Calu3 (cell line): ENCODE measurements at regions of chr12 and their contacts with region 1.

Region 1: GRCh38 chr12:10016881-10017280 is 6.5 kb downstream of the CLEC12B start:
- DNase-seq: no peak
- H3K4me3 Mint-ChIP-seq: no peak overlapping the region
- H3K27ac Mint-ChIP-seq: peak overlapping the region; percentile 8
- H3K4me1 Mint-ChIP-seq: peaks cover 20% of the 10 kb centered on the region
- H3K27me3 Mint-ChIP-seq: no peaks in the 10 kb centered on the region
- CTCF ChIP-seq: no peak

Region 2: DNA sequence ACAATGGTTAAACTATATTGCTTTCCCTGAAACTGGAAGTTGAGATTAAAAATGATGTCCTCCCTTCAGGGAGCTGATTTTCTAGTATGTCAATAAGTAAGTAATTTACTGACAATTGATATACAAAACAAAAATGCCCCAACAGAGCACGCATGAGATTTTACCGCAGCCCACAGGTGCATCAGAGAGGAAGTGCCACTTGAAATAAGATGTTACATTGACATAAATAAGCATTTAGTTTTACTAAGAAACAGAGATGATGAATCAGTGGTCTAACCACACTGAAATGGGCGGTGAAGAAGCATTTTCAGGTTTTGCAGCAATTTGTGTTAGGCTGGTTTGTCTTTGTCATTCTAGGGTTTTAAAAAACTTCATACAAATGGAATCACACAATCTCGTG is 275.2 kb before region 1 on chr12:
- CTCF ChIA-PET with region 1: no interaction called
- intact Hi-C with region 1: loop called (anchors 10 kb)
- DNase-seq: no peak
- H3K4me3 Mint-ChIP-seq: no peak overlapping the region
- H3K27ac Mint-ChIP-seq: no peak overlapping the region
- H3K4me1 Mint-ChIP-seq: peaks cover 41% of the 10 kb centered on the region
- H3K27me3 Mint-ChIP-seq: no peaks in the 10 kb centered on the region
- CTCF ChIP-seq: no peak

Region 3: GRCh38 chr12:9750276-9751203 is 266.3 kb before region 1 on chr12:
- CTCF ChIA-PET with region 1: interaction called, 10 read pairs
- intact Hi-C with region 1: loop called (anchors 10 kb)
- DNase-seq: peak; percentile 55
- H3K4me3 Mint-ChIP-seq: no peak overlapping the region
- H3K27ac Mint-ChIP-seq: no peak overlapping the region
- H3K4me1 Mint-ChIP-seq: no peaks in the 10 kb centered on the region
- H3K27me3 Mint-ChIP-seq: no peaks in the 10 kb centered on the region
- CTCF ChIP-seq: peak; percentile 73

Region 4: DNA sequence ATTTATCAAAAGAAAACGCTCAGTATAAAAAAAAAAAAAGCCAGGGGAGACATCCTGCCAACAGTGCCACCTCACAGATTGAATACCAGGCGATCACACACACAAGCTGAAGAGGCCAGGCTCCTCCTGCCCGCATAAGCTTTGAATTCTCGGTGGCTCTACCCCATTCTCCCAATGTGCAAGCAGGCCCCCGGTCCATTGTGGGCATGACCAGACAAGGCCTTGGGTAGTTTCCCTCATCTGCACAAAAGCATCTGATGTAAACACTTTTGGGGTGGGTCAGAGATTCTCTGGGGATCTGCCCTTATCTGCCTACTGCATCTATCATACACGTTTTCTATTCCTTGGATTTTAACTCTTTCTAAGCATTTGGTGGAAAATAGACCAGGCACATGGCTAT is 119.3 kb before region 1 on chr12:
- CTCF ChIA-PET with region 1: no interaction called
- intact Hi-C with region 1: no loop called
- DNase-seq: no peak
- H3K4me3 Mint-ChIP-seq: no peak overlapping the region
- H3K27ac Mint-ChIP-seq: no peak overlapping the region
- H3K4me1 Mint-ChIP-seq: no peaks in the 10 kb centered on the region
- H3K27me3 Mint-ChIP-seq: no peaks in the 10 kb centered on the region
- CTCF ChIP-seq: no peak